ENCODE measurements at regions of chr9 and their contacts with region 1.

Region 1: GRCh38 chr9:34500623-34501267 is 22.0 kb downstream of the ENHO start:
- DNase-seq: peak; percentile 62
- ATAC-seq: peak; percentile 75

Region 2: DNA sequence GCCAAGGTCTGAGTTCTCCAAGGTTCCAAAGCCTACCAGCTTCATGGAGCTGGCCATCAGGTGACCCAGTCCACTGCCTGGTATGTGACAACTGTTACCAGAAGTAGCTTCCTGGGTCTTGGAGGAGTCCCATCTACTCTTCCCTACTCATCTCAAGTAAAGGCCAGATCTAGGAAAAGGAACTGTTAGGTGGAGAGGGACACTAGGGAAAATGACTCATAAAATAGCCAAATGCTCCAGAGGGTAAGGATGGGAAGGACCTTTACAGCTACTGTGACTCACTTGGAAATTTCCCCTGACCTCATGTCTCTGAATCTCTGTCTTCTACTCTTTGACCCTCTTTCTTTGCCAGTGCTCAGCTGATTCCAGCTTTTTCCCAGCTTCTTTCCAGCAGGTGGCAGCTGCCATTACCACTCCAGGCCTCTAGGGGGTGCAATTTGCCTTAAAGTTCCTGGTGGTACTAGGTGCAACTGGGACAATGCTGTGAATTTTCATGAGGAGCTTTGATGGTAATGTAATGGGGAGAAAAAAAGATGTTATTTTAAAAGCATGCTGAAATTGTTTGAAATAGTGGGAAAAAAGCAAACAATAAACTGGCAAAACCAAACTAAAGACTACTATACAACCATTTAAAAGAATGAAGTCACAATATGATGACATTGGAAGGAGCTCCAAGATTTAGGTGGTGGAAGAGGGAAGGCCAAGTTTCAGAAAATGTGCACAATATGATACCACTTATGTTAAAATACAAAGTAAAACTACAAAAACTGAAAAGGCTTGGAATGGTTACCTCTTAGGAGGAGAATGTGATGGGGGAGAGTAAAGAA is 97.0 kb before region 1 on chr9:
- intact Hi-C with region 1: loop called (anchors 2 kb)
- DNase-seq: peak; percentile 72
- ATAC-seq: peak; percentile 71

Region 3: DNA sequence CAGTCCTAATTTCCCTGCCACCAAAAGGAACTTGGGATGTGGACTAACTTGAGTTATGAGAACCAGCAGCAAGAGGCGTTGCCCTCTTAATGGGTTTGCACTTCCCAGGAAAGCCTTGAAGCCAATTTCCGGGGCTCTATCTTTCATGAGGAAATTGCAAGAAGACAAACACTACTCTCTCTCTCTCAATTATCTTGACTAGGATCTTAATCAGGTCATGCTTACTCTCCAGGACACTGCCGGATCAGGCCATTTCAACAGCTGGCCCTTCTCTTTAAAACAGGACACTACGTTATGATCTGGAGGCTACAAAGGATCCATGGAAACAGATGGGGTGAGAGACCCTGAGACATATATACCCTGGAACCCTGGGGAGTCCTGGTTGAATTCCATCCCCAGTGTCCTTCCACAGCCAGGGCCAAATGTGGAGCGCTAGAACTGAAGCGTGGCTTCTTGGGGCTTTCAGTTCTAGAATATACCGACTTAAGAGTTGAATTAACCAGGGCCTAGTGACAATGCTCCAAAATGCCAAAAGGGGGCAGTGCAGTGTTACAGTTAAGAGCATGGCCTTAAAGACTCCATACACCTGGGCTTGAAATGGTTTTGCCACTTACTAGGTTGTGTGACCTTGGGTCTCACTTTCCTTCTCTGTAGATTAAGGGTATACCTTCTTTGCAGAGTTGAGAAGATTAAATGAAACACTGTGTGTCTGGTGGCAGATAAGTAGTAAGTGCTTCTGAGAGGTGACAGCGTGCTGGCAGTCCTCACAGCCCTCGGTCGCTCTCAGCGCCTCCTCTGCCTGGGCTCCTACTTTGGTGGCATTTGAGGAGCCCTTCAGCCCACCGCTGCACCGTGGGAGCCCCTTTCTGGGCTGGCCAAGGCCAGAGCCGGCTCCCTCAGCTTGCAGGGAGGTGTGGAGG is 63.5 kb before region 1 on chr9:
- intact Hi-C with region 1: loop called (anchors 2 kb)
- DNase-seq: no peak
- ATAC-seq: peak; percentile 89

Measured in Right ventricle myocardium superior (tissue), 1 donor.